Thyroid gland (tissue), 4 donors: ENCODE measurements at regions of chr1 and their contacts with region 1.

Region 1: DNA sequence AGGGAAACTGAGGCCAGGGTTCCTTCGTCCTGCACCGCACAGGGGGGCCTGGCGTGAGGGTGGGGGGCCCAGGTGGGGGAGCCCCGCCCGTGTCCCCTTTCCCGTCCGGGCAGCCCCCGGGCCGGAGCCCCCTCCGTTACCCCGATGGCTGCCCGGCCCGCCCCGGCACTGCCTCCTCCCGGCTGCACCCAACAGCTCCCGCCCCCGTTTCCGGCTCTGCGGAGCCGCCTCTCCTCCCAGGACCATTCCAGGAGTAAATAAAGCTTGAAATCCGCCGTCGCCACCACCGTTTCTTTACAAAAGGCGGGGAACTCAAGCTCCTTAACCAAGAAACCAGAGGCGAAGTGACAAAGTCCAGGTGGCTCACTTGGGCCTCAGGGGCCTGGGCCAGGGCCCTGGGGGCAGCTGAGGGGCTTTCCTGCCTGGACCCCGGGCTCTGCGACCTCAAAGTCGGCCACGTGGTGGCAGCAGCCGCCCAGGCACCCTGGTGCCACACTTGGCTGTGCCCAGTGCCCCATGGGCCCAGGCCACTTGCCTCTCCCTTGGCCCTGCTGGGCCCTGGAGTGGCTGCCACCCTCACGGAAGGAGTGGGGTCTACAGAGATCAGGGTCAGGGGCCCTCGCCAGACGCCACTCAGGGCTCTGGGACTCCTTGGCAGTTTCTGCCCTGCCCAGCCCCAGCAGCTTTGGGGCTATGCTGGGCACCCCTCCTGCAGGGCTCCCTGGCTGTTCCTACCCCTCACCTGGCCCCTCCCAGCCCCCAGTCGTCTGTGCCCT is 514 bp upstream of the FAAP20 start:
- DNase-seq: peak; percentile 91 to 92
- H3K4me3 ChIP-seq: peak overlapping the region in 2 of 3 donors; percentile 55 to 59
- H3K27ac ChIP-seq: peak overlapping the region; percentile 88 to 98 (median 92)
- H3K4me1 ChIP-seq: peaks cover 48 to 67% of the 10 kb centered on the region in 2 donors
- H3K27me3 ChIP-seq: no peaks in the 10 kb centered on the region
- CTCF ChIP-seq: peak; percentile 90 to 99 (median 97)
- POLR2A ChIP-seq: peak in 1 of 2 donors; percentile 35

Region 2: GRCh38 chr1:2381741-2382620 is 186.9 kb after region 1 on chr1:
- intact Hi-C with region 1: loop called (anchors 2 kb)
- DNase-seq: peak; percentile 79 to 81
- H3K4me3 ChIP-seq: no peak overlapping the region
- H3K27ac ChIP-seq: no peak overlapping the region
- H3K4me1 ChIP-seq: no peaks in the 10 kb centered on the region
- H3K27me3 ChIP-seq: no peaks in the 10 kb centered on the region
- CTCF ChIP-seq: peak; percentile 53 to 97 (median 91)
- POLR2A ChIP-seq: no peak

Region 3: DNA sequence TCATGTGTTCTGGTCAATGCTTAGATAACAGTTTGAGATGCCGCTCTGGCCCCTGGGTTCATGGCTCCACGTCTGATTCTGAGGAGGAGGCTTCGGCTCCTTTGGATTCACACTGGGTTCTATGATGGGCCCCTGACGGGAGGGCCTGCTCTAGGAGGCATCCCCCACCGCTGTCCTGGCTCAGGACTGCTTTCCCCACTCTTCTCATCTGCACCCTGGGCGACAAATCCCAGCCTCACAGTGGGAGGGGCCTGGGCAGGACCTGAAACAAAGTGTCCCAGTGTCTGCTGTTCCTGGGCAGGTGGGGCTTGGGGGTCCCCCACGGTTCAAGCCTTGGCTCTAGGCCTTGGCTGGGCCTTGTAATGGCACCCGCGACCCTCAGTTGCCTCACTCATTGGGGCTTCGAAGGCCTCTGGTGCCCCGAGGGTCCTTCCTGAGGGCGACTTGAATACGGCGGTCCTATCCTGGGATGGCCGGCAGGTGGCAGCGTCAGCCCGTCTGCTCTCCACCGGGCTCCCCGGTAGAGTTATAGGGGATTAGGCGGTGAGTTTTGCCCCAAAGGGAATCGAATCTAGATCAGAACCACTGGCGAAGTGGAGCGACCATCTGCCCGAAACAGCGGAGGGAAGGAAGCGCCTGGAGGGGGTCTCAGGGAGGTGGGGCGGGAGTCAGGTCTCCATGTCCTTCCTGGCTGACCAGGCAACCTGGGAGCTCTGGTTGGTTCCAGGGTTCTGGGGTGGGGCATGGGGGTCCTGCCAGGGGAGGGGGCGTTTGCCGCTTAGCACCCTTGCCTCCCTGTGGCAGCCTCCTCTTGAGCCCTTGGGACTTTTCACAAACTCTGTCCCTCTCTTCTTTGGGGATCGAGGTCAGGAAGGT is 219.2 kb after region 1 on chr1:
- intact Hi-C with region 1: no loop called
- DNase-seq: peak; percentile 68 to 74
- H3K4me3 ChIP-seq: no peak overlapping the region
- H3K27ac ChIP-seq: no peak overlapping the region
- H3K4me1 ChIP-seq: peaks cover 18 to 39% of the 10 kb centered on the region in 2 donors
- H3K27me3 ChIP-seq: no peaks in the 10 kb centered on the region
- CTCF ChIP-seq: peak; percentile 81 to 95 (median 92)
- POLR2A ChIP-seq: no peak

Region 4: DNA sequence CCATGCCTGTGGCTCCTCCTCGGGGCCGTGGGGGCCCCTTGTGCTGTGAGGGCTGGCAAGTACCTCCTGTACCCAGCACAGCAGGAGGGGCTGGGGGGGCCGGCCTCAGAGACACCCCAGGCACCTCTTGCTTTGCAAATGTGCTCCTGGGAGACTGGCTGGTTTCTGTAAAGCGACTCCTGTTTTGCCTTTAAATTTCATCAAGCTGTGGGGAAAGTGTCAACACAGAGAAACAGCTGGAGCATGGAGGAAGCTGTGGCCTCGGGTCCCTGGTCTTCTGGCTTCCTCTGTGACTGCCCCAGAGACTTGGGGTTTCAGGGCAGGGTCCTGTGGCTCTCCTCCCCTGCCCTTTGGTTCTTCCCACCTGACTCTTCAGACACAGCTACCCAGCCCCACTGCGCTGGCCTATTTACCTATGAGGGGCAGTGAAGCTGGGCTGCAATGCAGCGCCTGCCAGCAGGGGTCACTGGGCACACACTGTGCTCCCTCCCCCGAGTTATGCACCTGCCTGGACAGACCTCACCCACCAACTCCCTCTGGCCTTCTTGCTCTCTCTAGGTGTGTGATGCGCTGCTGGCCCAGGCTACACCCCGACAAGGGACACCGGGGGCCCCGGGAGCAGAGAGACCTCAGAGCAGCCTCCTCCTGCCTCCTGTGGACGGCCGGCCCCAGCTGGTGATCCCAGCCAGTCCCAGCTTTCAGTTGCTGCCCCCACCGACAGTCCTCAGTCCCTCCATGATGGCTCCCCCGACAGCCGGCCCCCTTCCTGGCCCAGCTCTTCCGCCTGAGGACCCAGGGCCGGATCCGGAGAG is 234.9 kb after region 1 on chr1:
- intact Hi-C with region 1: no loop called
- DNase-seq: no peak
- H3K4me3 ChIP-seq: no peak overlapping the region
- H3K27ac ChIP-seq: no peak overlapping the region
- H3K4me1 ChIP-seq: peaks cover 0 to 10% of the 10 kb centered on the region in 2 donors
- H3K27me3 ChIP-seq: no peaks in the 10 kb centered on the region
- CTCF ChIP-seq: no peak
- POLR2A ChIP-seq: no peak

Region 5: DNA sequence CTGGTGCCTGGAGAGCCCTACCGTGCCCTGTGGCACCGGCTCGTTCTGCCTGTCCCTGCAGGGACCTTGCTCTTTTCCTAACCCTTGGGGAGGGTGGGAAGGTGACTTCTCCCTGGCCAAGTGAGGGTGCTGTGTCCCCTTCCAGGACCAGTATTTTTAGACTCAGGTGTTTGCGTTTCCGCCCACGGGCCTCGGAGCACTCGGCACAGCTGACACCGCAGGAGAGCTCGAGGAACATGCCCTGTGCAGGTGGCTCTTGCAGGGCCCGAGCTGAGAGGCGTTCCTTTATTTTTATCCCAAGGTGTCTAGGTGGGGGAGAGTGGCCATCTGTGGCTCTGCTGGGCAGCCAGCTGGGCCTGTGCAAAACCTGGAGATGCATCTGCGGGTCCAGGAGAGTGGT is 297.0 kb after region 1 on chr1:
- intact Hi-C with region 1: no loop called
- DNase-seq: no peak
- H3K4me3 ChIP-seq: no peak overlapping the region
- H3K27ac ChIP-seq: no peak overlapping the region
- H3K4me1 ChIP-seq: no peaks in the 10 kb centered on the region
- H3K27me3 ChIP-seq: no peaks in the 10 kb centered on the region
- CTCF ChIP-seq: no peak
- POLR2A ChIP-seq: no peak

Region 6: DNA sequence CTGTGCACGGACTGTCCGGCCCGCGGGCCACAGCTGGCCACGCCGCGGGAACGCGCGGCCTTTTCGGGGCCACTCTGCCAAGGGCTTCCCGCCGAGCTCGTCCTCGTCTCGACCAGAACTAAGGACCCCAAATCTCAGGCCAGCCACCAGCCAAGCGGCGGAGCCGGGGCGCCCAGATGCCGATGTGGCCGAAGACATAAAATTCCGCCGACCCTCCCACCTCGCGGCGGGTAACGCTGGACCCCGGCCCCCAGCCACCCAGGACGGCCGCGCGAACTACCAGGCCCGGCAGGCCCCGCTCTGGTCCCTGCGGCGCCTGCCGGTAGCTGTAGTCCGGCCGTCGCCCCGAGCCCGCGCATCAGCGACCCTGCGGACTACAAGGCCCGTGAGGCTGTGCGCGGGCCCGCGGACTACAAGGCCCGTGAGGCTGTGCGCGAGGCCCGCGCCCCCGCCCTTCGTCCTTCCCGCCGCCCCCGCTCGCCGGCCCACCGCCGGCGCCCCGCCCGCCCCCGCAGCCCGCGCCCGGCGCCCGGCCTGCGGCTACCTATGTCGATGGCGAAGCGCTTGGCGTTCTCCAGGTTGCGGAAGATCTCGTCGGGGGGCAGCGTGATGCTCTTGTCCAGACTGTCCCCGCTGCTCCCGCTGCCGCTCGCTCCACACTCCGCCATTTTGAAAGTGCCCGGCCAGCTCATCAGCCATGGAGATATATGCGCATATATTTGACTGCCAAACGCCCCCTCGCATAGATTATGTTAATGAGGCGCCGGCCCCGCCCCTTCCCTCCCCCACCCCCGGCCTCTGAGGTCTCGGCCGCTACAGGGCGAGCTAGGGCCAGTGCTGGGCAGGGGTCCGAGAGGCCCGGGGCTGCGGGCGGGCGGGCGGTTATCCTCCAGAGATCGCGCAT is 331.1 kb after region 1 on chr1 and contains the start of gene PANK4:
- intact Hi-C with region 1: loop called (anchors 10 kb)
- DNase-seq: peak; percentile 95 to 96
- H3K4me3 ChIP-seq: peak within 1 kb of the TSS; percentile 72 to 98 (median 85)
- H3K27ac ChIP-seq: peak within 1 kb of the TSS in 2 of 3 donors; percentile 62 to 79
- H3K4me1 ChIP-seq: peaks cover 28 to 54% of the 10 kb centered on the region in 2 donors
- H3K27me3 ChIP-seq: no peaks in the 10 kb centered on the region
- CTCF ChIP-seq: peak in 3 of 6 experiments; percentile 12 to 46 (median 36)
- POLR2A ChIP-seq: peak in 1 of 2 donors; percentile 73
- total RNA-seq, gene PANK4: 29.3 to 39.9 (median 38.0) TPM